Tibial artery (tissue), 4 donors: ENCODE measurements at regions of chr5 and their contacts with region 1.

Region 1: GRCh38 chr5:156497804-156498208 is 170.8 kb downstream of the SGCD start:
- DNase-seq: no peak
- H3K4me3 ChIP-seq: no peak overlapping the region
- H3K27ac ChIP-seq: no peak overlapping the region
- H3K4me1 ChIP-seq: peaks cover 0 to 39% (median 0%) of the 10 kb centered on the region in 4 donors
- H3K27me3 ChIP-seq: no peaks in the 10 kb centered on the region
- CTCF ChIP-seq: no peak

Region 2: GRCh38 chr5:156359476-156359875 is 138.3 kb before region 1 on chr5:
- intact Hi-C with region 1: loop called (anchors 10 kb)
- DNase-seq: no peak
- H3K4me3 ChIP-seq: no peak overlapping the region
- H3K27ac ChIP-seq: no peak overlapping the region
- H3K4me1 ChIP-seq: no peaks in the 10 kb centered on the region
- H3K27me3 ChIP-seq: no peaks in the 10 kb centered on the region
- CTCF ChIP-seq: no peak

Region 3: DNA sequence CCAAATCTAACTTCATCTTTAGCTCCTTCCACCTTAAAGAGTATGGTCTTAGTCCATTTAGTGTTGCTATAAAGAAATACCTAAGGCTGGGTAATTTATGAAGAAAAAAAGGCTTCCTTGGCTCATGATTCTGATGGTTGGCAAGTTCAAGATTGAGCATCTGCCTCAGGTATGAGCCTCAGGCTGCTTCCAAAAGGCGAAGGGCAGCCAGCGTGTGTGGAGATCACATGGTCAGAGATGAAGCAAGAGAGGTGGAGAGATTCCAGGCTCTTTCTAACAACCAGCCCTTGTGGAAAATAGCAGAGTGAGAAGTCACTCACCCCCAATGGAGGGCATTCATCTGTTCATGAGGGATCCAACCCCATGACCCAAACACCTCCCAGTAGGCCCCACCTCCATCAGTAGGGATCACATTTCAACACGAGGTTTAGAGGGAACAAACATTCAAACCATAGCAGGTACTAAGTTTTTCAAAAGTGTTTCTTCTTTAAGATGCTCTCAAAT is 55.1 kb after region 1 on chr5:
- intact Hi-C with region 1: no loop called
- DNase-seq: no peak
- H3K4me3 ChIP-seq: no peak overlapping the region
- H3K27ac ChIP-seq: no peak overlapping the region
- H3K4me1 ChIP-seq: peaks cover 0 to 9% (median 0%) of the 10 kb centered on the region in 4 donors
- H3K27me3 ChIP-seq: no peaks in the 10 kb centered on the region
- CTCF ChIP-seq: no peak